Vagina (tissue), 2 donors: ENCODE measurements at regions of chr2 and their contacts with region 1.

Region 1: DNA sequence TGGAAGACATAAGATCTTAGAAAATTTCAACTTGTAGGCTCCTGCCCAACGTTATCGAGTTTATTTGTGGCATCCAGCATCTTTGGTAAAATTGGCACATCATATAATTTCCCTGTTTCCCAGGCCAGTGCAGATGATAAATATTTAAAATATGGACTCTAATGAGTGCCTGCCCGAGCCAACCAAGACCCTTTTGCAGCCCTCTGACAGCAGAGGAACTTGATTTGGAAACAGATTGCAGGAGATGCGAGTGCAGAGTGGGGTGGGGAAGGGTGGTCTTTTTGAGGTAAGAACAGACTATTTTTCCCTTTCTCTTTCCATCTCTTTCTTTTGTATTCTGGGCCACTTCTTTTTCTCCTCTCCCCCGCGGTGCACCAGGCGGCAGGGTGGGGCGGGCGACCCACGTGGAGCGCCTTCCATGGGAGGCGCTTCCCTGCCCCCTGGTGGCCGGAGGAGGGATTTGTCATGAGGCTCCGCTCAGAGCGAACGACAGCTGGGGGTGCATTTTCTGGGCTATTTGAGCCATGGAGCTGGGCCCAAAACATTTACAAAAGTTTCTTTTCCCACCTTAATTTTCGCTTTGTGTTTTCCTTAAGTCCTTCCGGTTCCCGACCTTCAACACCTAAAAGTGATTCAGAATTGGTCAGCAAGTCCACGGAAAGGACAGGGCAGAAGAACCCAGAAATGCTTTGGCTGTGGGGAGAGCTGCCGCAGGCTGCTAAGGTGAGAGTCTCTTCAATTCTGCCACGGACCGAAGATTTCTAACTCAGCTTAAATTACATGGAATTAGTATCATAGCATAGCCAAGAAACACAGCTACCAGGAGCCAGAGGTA is 32.7 kb downstream of the LPIN1 start:
- DNase-seq: peak in 1 of 2 donors; percentile 67
- H3K4me3 ChIP-seq: no peak overlapping the region
- H3K27ac ChIP-seq: no peak overlapping the region
- H3K4me1 ChIP-seq: peaks cover 8% of the 10 kb centered on the region
- H3K27me3 ChIP-seq: no peaks in the 10 kb centered on the region
- CTCF ChIP-seq: peak; percentile 95 to 98 (median 95)
- POLR2A ChIP-seq: no peak

Region 2: GRCh38 chr2:11477994-11478393 is 301.1 kb before region 1 on chr2:
- intact Hi-C with region 1: loop called (anchors 5 kb)
- DNase-seq: no peak
- H3K4me3 ChIP-seq: no peak overlapping the region
- H3K27ac ChIP-seq: no peak overlapping the region
- H3K4me1 ChIP-seq: peaks cover 8% of the 10 kb centered on the region
- H3K27me3 ChIP-seq: no peaks in the 10 kb centered on the region
- CTCF ChIP-seq: peak; percentile 80 to 97 (median 90)
- POLR2A ChIP-seq: no peak

Region 3: GRCh38 chr2:11688222-11689069 is 90.7 kb before region 1 on chr2:
- intact Hi-C with region 1: loop called (anchors 5 kb)
- DNase-seq: no peak
- H3K4me3 ChIP-seq: peak overlapping the region; percentile 13 to 22
- H3K27ac ChIP-seq: peak overlapping the region; percentile 53
- H3K4me1 ChIP-seq: peaks cover 15% of the 10 kb centered on the region
- H3K27me3 ChIP-seq: no peaks in the 10 kb centered on the region
- CTCF ChIP-seq: peak; percentile 16 to 80 (median 64)
- POLR2A ChIP-seq: no peak